ENCODE measurements at regions of chr18 and their contacts with region 1.

Region 1: DNA sequence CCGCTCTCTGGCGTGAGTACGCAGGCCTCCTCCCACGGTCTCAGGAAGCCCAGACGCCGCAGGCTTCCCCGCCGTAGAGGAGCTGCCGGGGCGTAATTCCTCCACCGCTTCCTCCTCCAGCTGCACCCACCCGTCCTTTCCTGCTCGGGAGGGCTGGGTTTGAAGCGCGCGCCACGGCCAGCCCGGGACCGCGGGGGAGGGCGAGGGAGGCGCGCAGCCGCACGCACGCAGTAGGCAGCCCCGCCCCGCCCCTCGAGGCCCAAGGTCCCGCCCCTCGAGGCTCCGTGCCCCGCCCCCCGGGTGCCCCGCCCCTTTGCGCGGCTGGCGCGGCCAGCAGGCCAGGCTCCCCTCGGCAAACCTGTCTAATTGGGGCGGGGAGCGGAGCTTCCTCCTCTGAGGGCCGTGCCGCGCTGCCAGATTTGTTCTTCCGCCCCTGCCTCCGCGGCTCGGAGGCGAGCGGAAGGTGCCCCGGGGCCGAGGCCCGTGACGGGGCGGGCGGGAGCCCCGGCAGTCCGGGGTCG is at the start of gene MALT1:
- DNase-seq: peak; percentile 86 to 98 (median 94)
- ATAC-seq: peak; percentile 85 to 86
- H3K4me3 Mint-ChIP-seq: peak within 1 kb of the TSS; percentile 91 to 97 (median 94)
- H3K27ac Mint-ChIP-seq: peak within 1 kb of the TSS; percentile 89 to 98 (median 94)
- H3K4me1 Mint-ChIP-seq: peaks cover 21 to 65% (median 50%) of the 10 kb centered on the region in 4 donors
- H3K27me3 Mint-ChIP-seq: no peaks in the 10 kb centered on the region
- polyA plus RNA-seq, gene MALT1: 24.7 to 37.1 (median 27.3) TPM

Region 2: GRCh38 chr18:58611471-58612131 is 59.6 kb before region 1 on chr18:
- POLR2A ChIA-PET with region 1: interaction called, 13 read pairs
- DNase-seq: no peak
- ATAC-seq: no peak
- H3K4me3 Mint-ChIP-seq: peak overlapping the region in 1 of 10 donors; percentile 37
- H3K27ac Mint-ChIP-seq: peak overlapping the region in 4 of 10 donors; percentile 20 to 75 (median 64)
- H3K4me1 Mint-ChIP-seq: peaks cover 27 to 65% (median 61%) of the 10 kb centered on the region in 4 donors
- H3K27me3 Mint-ChIP-seq: no peaks in the 10 kb centered on the region

Region 3: GRCh38 chr18:58653814-58654509 is 17.2 kb before region 1 on chr18:
- POLR2A ChIA-PET with region 1: interaction called, 113 read pairs
- DNase-seq: no peak
- ATAC-seq: no peak
- H3K4me3 Mint-ChIP-seq: peak overlapping the region in 6 of 10 donors; percentile 12 to 29 (median 15)
- H3K27ac Mint-ChIP-seq: peak overlapping the region in 4 of 10 donors; percentile 2 to 90 (median 54)
- H3K4me1 Mint-ChIP-seq: peaks cover 37 to 86% (median 74%) of the 10 kb centered on the region in 4 donors
- H3K27me3 Mint-ChIP-seq: no peaks in the 10 kb centered on the region

Region 4: DNA sequence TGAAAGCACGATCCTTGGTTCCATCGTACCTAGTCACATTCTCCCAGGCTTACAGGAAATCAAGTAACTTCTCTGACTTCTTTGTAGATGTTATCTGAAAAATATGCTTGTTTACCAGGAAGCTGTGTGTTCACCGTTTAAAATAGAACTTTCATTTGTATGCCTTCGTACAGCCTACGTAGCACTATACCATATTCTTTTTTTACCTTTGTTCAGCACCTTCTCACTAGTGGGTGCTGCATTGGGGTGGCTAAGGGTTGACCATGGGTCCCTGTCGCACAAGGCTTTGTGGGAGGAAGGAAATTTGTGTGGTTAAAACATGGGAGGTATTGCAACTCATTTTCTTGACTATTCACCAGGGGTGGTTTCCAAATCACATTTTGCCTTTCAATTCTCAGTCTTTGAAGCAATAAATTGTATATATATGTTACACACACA is 16.7 kb after region 1 on chr18:
- POLR2A ChIA-PET with region 1: interaction called, 98 read pairs
- DNase-seq: peak in 9 of 10 donors; percentile 34 to 87 (median 71)
- ATAC-seq: peak; percentile 92 to 97
- H3K4me3 Mint-ChIP-seq: peak overlapping the region; percentile 60 to 90 (median 82)
- H3K27ac Mint-ChIP-seq: peak overlapping the region; percentile 91 to 100 (median 96)
- H3K4me1 Mint-ChIP-seq: peaks cover 30 to 79% (median 72%) of the 10 kb centered on the region in 4 donors
- H3K27me3 Mint-ChIP-seq: no peaks in the 10 kb centered on the region

Region 5: DNA sequence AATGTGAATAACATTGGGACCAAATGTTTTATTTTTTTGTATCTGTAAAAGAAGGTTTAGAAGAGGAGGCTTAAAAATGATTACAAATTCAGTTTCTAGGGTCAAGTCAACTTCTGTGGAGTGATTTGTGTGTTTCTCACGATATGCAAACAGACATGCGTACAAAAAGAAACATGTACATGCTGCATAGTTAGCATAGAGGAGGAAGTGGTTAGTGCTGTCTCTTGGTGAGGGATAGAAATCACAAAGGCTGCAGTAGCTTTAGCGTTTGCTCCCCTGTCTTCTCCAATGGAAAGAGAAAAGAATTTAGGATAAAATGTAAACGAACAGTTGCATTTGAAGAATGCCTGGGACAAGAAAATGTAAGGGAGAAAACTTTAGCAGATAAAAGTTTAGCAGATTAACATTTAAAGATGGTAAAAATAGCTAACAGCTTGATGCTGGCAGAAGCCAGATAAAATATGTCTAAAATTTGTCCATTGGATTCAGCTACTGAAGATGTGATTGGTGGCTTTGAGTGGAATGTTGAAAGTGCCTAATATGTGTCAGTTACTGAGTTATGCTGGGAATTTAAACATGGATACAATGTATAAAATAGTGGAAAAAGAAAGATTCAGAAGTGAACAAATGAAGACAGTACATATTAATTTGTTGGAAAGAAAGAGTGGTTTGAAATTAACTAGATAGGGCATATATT is 45.0 kb after region 1 on chr18:
- POLR2A ChIA-PET with region 1: interaction called, 29 read pairs
- DNase-seq: peak in 4 of 10 donors; percentile 7 to 53 (median 44)
- ATAC-seq: peak; percentile 84 to 87
- H3K4me3 Mint-ChIP-seq: peak overlapping the region; percentile 36 to 88 (median 76)
- H3K27ac Mint-ChIP-seq: peak overlapping the region; percentile 71 to 96 (median 88)
- H3K4me1 Mint-ChIP-seq: peaks cover 36 to 72% (median 60%) of the 10 kb centered on the region in 4 donors
- H3K27me3 Mint-ChIP-seq: no peaks in the 10 kb centered on the region

Region 6: DNA sequence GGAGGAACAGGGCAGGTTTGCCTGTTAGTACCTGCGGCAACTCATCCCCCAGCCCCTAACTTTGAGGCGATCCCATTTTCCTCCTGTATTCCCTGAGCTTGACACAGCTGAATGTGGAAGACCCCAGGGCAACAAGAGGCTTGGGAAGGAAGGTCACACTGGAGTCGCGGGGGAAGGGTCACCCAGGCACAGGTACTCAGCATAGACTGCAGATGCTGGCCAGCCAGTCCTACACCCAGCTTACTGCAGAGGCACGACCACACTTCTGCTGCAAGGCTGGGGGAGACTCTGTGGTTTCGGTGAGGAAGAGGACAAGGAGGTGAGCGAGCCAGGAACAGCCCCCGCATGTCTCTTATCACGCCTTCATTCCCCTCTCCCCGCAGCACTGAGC is 91.6 kb after region 1 on chr18:
- POLR2A ChIA-PET with region 1: interaction called, 18 read pairs
- DNase-seq: no peak
- ATAC-seq: no peak
- H3K4me3 Mint-ChIP-seq: no peak overlapping the region
- H3K27ac Mint-ChIP-seq: peak overlapping the region in 1 of 10 donors; percentile 76
- H3K4me1 Mint-ChIP-seq: peaks cover 13 to 33% (median 30%) of the 10 kb centered on the region in 4 donors
- H3K27me3 Mint-ChIP-seq: peaks cover 20 to 44% (median 26%) of the 10 kb centered on the region in 5 donors

Measured in naive thymus-derived CD8-positive, alpha-beta T cell (primary cell).